HEK293 (cell line): ENCODE measurements at regions of chr3 and their contacts with region 1.

Region 1: DNA sequence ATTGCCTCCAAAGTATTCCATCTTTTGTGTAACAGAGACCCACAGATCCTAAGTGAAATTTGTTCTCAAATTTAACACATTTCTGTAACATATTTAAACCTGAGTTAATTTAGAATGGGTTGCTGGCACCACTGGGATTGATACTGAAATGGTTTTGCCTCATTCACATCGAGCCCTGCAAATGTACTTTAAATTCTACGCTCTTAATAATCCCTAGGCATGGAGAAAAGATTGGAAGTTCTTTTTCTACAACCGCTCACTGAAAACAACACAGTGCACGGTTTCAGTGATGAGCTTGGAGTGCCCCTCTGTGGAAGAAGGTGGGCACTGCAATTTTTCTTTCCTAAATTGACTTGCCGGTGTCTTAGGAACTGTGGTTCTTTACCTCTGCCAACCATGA is 109.9 kb upstream of the ATP11B start:
- H3K4me3 ChIP-seq: no peak overlapping the region
- H3K27ac ChIP-seq: no peak overlapping the region
- H3K4me1 ChIP-seq: no peaks in the 10 kb centered on the region; the same call in 1 of the 2 replicates
- CTCF ChIP-seq: no peak; the same call in 1 of the 2 replicates

Region 2: GRCh38 chr3:182618085-182618732 is 65.2 kb before region 1 on chr3:
- CTCF ChIA-PET with region 1: interaction called, 29 read pairs
- POLR2A ChIA-PET with region 1: no interaction called
- H3K4me3 ChIP-seq: no peak overlapping the region
- H3K27ac ChIP-seq: no peak overlapping the region
- H3K4me1 ChIP-seq: no peaks in the 10 kb centered on the region
- CTCF ChIP-seq: peak; percentile 51